PC-9 (cell line): ENCODE measurements at regions of chr2 and their contacts with region 1.

Region 1: GRCh38 chr2:230814616-230815015 is 50.1 kb upstream of the ITM2C start:
- DNase-seq: no peak
- H3K4me3 ChIP-seq: no peak overlapping the region
- H3K27ac ChIP-seq: no peak overlapping the region
- H3K4me1 ChIP-seq: no peaks in the 10 kb centered on the region
- H3K27me3 ChIP-seq: no peaks in the 10 kb centered on the region
- CTCF ChIP-seq: peak; percentile 59

Region 2: GRCh38 chr2:229800997-229801754 is 1013.4 kb before region 1 on chr2:
- CTCF ChIA-PET with region 1: no interaction called
- POLR2A ChIA-PET with region 1: no interaction called
- intact Hi-C with region 1: loop called (anchors 10 kb)
- DNase-seq: peak; percentile 35 to 37
- H3K4me3 ChIP-seq: no peak overlapping the region
- H3K27ac ChIP-seq: no peak overlapping the region
- H3K4me1 ChIP-seq: no peaks in the 10 kb centered on the region
- H3K27me3 ChIP-seq: no peaks in the 10 kb centered on the region
- CTCF ChIP-seq: peak; percentile 79

Region 3: DNA sequence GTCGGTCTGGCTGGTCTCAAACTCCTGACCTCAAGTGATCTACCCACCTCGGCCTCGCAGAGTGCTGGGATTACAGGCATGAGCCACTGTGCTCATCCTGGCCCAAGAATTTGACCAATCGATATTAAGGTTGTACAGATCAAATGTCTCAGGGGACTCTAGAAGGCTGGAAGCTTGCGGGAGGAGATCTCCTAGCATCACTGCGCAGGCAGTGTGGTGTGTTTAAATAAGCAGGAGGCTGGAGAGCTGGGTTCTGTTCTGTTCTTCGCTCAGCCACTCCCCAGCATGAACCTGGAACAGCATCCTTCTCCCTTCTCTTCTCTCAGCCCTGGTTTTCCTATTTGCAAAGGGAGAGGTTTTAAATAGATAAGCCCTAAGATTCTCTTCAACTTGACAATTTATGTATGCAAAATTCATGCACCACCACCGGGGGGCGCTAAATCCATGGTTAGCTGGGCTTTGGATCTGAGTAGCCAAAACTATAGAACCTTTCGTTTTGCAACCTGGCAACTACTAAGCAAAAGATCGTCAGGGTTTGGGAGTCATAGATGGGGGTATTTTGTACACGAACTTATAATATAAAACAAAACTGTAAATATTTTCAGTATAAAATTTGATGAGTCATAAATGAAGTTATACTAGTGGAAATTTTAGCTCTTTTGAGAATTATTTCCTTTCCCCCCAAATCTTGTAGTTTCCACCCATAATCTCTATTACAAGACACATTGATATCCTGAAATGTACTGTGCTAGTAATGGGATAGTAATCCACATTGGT is 806.5 kb before region 1 on chr2:
- CTCF ChIA-PET with region 1: no interaction called
- POLR2A ChIA-PET with region 1: no interaction called
- intact Hi-C with region 1: loop called (anchors 10 kb)
- DNase-seq: peak; percentile 42 to 71
- H3K4me3 ChIP-seq: no peak overlapping the region
- H3K27ac ChIP-seq: no peak overlapping the region
- H3K4me1 ChIP-seq: peaks cover 7% of the 10 kb centered on the region
- H3K27me3 ChIP-seq: no peaks in the 10 kb centered on the region
- CTCF ChIP-seq: peak; percentile 94

Region 4: GRCh38 chr2:230068016-230068650 is 746.5 kb before region 1 on chr2:
- CTCF ChIA-PET with region 1: no interaction called
- POLR2A ChIA-PET with region 1: no interaction called
- intact Hi-C with region 1: loop called (anchors 5 kb)
- DNase-seq: peak in 1 of 2 experiments; percentile 42
- H3K4me3 ChIP-seq: peak overlapping the region; percentile 77
- H3K27ac ChIP-seq: no peak overlapping the region
- H3K4me1 ChIP-seq: no peaks in the 10 kb centered on the region
- H3K27me3 ChIP-seq: no peaks in the 10 kb centered on the region
- CTCF ChIP-seq: 0 out of 2 replicates have a peak, but pooled peaks have one; percentile 23

Region 5: GRCh38 chr2:230575642-230576324 is 238.8 kb before region 1 on chr2:
- CTCF ChIA-PET with region 1: no interaction called
- POLR2A ChIA-PET with region 1: no interaction called
- intact Hi-C with region 1: no loop called
- DNase-seq: peak in 1 of 2 experiments; percentile 34
- H3K4me3 ChIP-seq: no peak overlapping the region
- H3K27ac ChIP-seq: no peak overlapping the region
- H3K4me1 ChIP-seq: no peaks in the 10 kb centered on the region
- H3K27me3 ChIP-seq: no peaks in the 10 kb centered on the region
- CTCF ChIP-seq: no peak

Region 6: GRCh38 chr2:230712443-230713330 is 101.9 kb before region 1 on chr2 and contains the start of gene CAB39:
- CTCF ChIA-PET with region 1: no interaction called
- POLR2A ChIA-PET with region 1: no interaction called
- intact Hi-C with region 1: loop called (anchors 5 kb)
- DNase-seq: peak; percentile 73 to 90
- H3K4me3 ChIP-seq: peak within 1 kb of the TSS; percentile 87
- H3K27ac ChIP-seq: peak within 1 kb of the TSS; percentile 84
- H3K4me1 ChIP-seq: peaks cover 42% of the 10 kb centered on the region
- H3K27me3 ChIP-seq: no peaks in the 10 kb centered on the region
- CTCF ChIP-seq: peak; percentile 64; the same call in 1 of the 2 replicates
- total RNA-seq, gene CAB39: 70.9 and 86.1 TPM in 2 replicates

Region 7: DNA sequence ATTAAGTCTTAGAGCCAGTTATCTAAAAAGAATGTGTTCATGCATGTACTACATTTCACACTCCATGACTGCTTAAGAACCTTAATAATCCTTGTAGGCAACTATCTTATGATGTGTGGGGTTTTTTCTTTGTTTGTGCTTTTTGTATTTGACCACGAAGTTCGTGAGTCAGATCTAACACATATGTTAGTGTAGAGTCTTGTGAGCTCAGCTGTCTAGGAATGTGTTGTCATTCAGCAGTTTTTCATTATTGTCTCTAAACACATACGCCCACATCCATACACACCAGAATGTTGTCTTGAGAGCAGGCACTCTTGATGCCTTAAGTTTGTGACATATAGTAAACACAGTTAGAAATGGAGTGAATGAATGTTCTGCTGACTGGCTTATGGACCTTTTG is 63.6 kb before region 1 on chr2:
- CTCF ChIA-PET with region 1: no interaction called
- POLR2A ChIA-PET with region 1: no interaction called
- intact Hi-C with region 1: no loop called
- DNase-seq: no peak
- H3K4me3 ChIP-seq: no peak overlapping the region
- H3K27ac ChIP-seq: no peak overlapping the region
- H3K4me1 ChIP-seq: no peaks in the 10 kb centered on the region
- H3K27me3 ChIP-seq: no peaks in the 10 kb centered on the region
- CTCF ChIP-seq: no peak

Region 8: GRCh38 chr2:230774348-230774951 is 40.2 kb before region 1 on chr2:
- CTCF ChIA-PET with region 1: no interaction called
- POLR2A ChIA-PET with region 1: no interaction called
- intact Hi-C with region 1: loop called (anchors 1 kb)
- DNase-seq: peak in 1 of 2 experiments; percentile 81
- H3K4me3 ChIP-seq: no peak overlapping the region
- H3K27ac ChIP-seq: peak overlapping the region; percentile 61
- H3K4me1 ChIP-seq: peaks cover 63% of the 10 kb centered on the region
- H3K27me3 ChIP-seq: no peaks in the 10 kb centered on the region
- CTCF ChIP-seq: no peak

Region 9: GRCh38 chr2:232204457-232204931 is 1389.9 kb after region 1 on chr2:
- CTCF ChIA-PET with region 1: interaction called, 14 read pairs
- POLR2A ChIA-PET with region 1: no interaction called
- intact Hi-C with region 1: no loop called
- DNase-seq: no peak
- H3K4me3 ChIP-seq: no peak overlapping the region
- H3K27ac ChIP-seq: no peak overlapping the region
- H3K4me1 ChIP-seq: no peaks in the 10 kb centered on the region
- H3K27me3 ChIP-seq: no peaks in the 10 kb centered on the region
- CTCF ChIP-seq: no peak